Ovary (tissue), 10 donors: ENCODE measurements at regions of chr19 and their contacts with region 1.

Region 1: GRCh38 chr19:9934132-9934950 is 2.0 kb downstream of the OLFM2 start:
- DNase-seq: peak; percentile 81 to 90 (median 83)
- H3K4me3 ChIP-seq: no peak overlapping the region
- H3K27ac ChIP-seq: peak overlapping the region in 1 of 2 donors; percentile 23
- H3K4me1 ChIP-seq: peaks cover 2% of the 10 kb centered on the region
- H3K27me3 ChIP-seq: no peaks in the 10 kb centered on the region
- CTCF ChIP-seq: peak; percentile 81 to 94 (median 82)
- EP300 ChIP-seq: no peak
- POLR2A ChIP-seq: no peak

Region 2: GRCh38 chr19:9768175-9769112 is 165.9 kb before region 1 on chr19 and contains the start of gene ZNF846:
- intact Hi-C with region 1: no loop called
- DNase-seq: peak; percentile 91 to 95 (median 92)
- H3K4me3 ChIP-seq: peak within 1 kb of the TSS; percentile 84
- H3K27ac ChIP-seq: peak within 1 kb of the TSS; percentile 38 to 91
- H3K4me1 ChIP-seq: peaks cover 3% of the 10 kb centered on the region
- H3K27me3 ChIP-seq: no peaks in the 10 kb centered on the region
- CTCF ChIP-seq: no peak
- EP300 ChIP-seq: peak; percentile 25
- POLR2A ChIP-seq: peak; percentile 59
- total RNA-seq, gene ZNF846: 12.6 to 31.0 (median 21.0) TPM

Region 3: DNA sequence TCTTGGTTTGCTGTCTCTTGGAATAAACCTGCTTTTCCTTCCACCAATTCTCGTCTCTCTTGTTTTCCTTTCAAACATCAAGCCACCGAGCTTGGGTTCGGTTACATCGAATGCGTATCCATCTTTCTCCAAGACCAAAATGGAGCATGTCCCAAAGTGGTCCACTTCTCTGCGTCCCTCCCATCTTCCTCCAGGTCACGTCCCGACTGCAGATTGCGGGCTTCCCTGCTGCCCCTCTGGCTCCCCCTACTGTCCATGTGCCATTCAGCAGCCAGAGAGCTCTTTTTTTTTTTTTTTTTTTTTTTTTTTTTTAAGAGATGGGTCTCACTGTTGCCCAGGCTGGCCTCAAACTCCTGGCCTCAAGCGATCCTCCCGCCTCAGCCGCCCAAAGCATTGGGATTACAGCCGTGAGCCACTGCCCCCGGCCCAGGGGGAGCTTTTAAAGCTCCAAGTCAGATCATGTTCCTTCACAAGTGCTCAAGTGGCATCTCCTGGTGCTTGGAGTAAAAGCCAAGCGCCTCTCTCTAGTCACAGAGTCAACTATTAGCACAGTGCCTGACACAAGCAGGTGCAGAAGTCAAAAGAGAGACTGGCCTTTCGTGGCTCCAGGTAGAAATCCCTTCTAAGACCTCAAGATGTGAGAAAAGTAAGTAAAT is 66.0 kb after region 1 on chr19:
- intact Hi-C with region 1: loop called in 2 of 4 experiments (anchors 5 to 10 kb)
- DNase-seq: peak; percentile 61 to 77 (median 72)
- H3K4me3 ChIP-seq: no peak overlapping the region
- H3K27ac ChIP-seq: no peak overlapping the region
- H3K4me1 ChIP-seq: no peaks in the 10 kb centered on the region
- H3K27me3 ChIP-seq: no peaks in the 10 kb centered on the region
- CTCF ChIP-seq: peak in 2 of 3 donors; percentile 36 to 73
- EP300 ChIP-seq: no peak
- POLR2A ChIP-seq: no peak

Region 4: DNA sequence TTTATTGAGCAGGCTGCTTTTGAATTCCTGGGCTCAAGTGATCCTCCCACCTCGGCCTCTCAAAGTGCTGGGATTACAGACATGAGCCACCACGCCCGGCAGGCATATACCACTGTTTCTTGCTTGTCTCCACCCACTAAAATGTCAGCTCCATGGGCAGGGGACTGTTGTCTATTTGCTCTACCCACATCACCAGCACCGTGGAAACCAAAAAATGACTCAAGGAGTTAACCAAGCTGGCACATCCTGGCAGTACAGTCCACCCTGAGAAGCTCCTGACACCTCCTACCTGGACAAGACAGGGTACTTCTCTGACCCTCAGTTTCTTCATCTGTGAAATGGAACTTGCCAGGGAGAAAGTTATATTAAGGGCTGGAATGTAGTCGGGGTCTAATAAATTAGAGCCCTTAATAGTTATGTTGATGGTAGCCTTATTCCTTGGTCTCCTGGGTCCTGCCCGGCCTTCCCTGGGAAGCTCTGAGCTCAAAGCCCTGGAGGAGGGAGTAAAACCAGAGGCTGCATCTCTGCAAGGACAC is 92.9 kb after region 1 on chr19:
- intact Hi-C with region 1: loop called (anchors 2 to 5 kb)
- DNase-seq: no peak
- H3K4me3 ChIP-seq: no peak overlapping the region
- H3K27ac ChIP-seq: no peak overlapping the region
- H3K4me1 ChIP-seq: no peaks in the 10 kb centered on the region
- H3K27me3 ChIP-seq: no peaks in the 10 kb centered on the region
- CTCF ChIP-seq: no peak
- EP300 ChIP-seq: no peak
- POLR2A ChIP-seq: no peak

Region 5: GRCh38 chr19:10259162-10259905 is 325.0 kb after region 1 on chr19:
- intact Hi-C with region 1: loop called in 3 of 4 experiments (anchors 5 to 10 kb)
- DNase-seq: peak; percentile 73 to 85 (median 80)
- H3K4me3 ChIP-seq: no peak overlapping the region
- H3K27ac ChIP-seq: no peak overlapping the region
- H3K4me1 ChIP-seq: no peaks in the 10 kb centered on the region
- H3K27me3 ChIP-seq: no peaks in the 10 kb centered on the region
- CTCF ChIP-seq: peak; percentile 31 to 56 (median 49)
- EP300 ChIP-seq: no peak
- POLR2A ChIP-seq: no peak